ENCODE measurements at regions of chr11 and their contacts with region 1.

Region 1: GRCh38 chr11:64996710-64997380 is at the start of gene BATF2:
- DNase-seq: peak; percentile 81
- H3K4me3 ChIP-seq: no peak within 1 kb of the TSS
- H3K27ac ChIP-seq: peak within 1 kb of the TSS in 1 of 3 donors; percentile 50
- H3K4me1 ChIP-seq: peaks cover 8 to 15% of the 10 kb centered on the region in 2 donors
- H3K27me3 ChIP-seq: no peaks in the 10 kb centered on the region
- CTCF ChIP-seq: peak in 4 of 6 experiments; percentile 48 to 58 (median 56)
- POLR2A ChIP-seq: peak in 1 of 2 donors; percentile 55
- total RNA-seq, gene BATF2: 1.2 to 9.1 (median 2.3) TPM

Region 2: DNA sequence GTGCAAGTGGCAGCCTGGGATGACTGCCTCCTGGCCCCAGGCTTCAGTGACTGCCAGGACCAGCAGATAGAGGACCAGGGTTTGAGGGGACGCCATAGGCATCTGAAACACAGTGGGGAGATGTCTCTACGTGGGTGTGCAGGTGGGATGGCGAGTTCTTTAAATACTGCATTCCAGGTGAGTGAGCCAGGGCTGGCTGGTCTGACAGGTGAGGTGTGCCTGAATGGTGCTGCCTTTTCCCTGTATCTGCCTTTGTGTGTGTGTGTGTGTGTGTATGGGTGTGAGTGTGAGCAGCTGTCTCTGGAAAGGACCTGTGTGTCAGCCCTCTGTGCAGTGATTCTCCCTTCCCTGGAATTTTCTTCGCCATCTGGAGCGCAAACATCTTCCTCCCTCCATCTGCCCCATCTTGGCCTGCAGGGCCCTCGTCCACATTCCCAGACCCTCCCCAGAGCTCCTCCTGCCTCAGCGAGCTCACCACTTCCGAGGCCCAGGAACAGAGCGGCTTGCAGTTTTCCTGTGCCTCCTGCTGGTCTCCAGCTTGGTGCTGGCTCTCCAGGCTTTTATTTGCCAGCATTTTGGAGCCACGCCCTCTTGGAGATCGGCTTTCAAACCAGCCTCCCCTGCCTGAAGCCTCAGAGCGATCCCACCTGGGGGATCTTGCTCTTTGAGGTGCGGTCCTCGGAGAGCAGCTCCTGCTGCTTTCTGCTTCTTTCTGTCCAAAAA is 61.3 kb before region 1 on chr11 and contains the start of gene GPHA2:
- intact Hi-C with region 1: loop called (anchors 10 kb)
- DNase-seq: no peak
- H3K4me3 ChIP-seq: no peak within 1 kb of the TSS
- H3K27ac ChIP-seq: no peak within 1 kb of the TSS
- H3K4me1 ChIP-seq: no peaks in the 10 kb centered on the region
- H3K27me3 ChIP-seq: no peaks in the 10 kb centered on the region
- CTCF ChIP-seq: no peak
- POLR2A ChIP-seq: no peak
- total RNA-seq, gene GPHA2: 0.94 TPM in 1 of 4 donors, not detected in the others